ENCODE measurements at regions of chr1 and their contacts with region 1.

Region 1: DNA sequence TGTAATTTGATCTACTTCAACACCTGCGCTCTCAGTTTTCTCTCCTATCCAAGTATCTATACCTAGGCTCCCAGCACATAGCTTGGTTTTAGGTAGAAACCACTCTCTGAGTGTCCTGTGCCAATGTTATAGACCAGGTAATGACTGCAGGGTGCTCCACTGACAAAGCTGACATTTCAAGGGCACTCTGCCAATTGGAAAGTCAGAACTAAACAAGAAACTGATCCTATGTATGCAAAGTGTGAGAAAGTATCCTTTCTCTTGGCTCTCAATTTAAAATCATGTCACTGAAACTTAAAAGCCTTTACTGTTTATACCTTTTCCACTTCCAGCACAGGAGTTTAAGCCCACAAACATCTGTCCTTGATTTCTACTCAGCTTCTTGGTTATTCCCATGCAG is 45.0 kb upstream of the AIM2 start:
- DNase-seq: no peak
- ATAC-seq: no peak
- H3K4me3 ChIP-seq: no peak overlapping the region
- H3K4me3 Mint-ChIP-seq: no peak overlapping the region
- H3K27ac ChIP-seq: no peak overlapping the region
- H3K27ac Mint-ChIP-seq: no peak overlapping the region
- H3K4me1 ChIP-seq: no peaks in the 10 kb centered on the region
- H3K4me1 Mint-ChIP-seq: no peaks in the 10 kb centered on the region
- H3K27me3 ChIP-seq: no peaks in the 10 kb centered on the region
- H3K27me3 Mint-ChIP-seq: peaks cover 15% of the 10 kb centered on the region
- CTCF ChIP-seq: no peak

Region 2: GRCh38 chr1:157724537-157725220 is 1396.8 kb before region 1 on chr1:
- CTCF ChIA-PET with region 1: no interaction called
- POLR2A ChIA-PET with region 1: no interaction called
- intact Hi-C with region 1: no loop called
- DNase-seq: peak in 1 of 9 experiments; percentile 17
- ATAC-seq: peak; percentile 65
- H3K4me3 ChIP-seq: no peak overlapping the region
- H3K4me3 Mint-ChIP-seq: no peak overlapping the region
- H3K27ac ChIP-seq: peak overlapping the region in 1 of 2 experiments; percentile 61
- H3K27ac Mint-ChIP-seq: peak overlapping the region; percentile 60
- H3K4me1 ChIP-seq: peaks cover 15% of the 10 kb centered on the region
- H3K4me1 Mint-ChIP-seq: peaks cover 38% of the 10 kb centered on the region
- H3K27me3 ChIP-seq: no peaks in the 10 kb centered on the region
- H3K27me3 Mint-ChIP-seq: no peaks in the 10 kb centered on the region
- CTCF ChIP-seq: no peak

Region 3: DNA sequence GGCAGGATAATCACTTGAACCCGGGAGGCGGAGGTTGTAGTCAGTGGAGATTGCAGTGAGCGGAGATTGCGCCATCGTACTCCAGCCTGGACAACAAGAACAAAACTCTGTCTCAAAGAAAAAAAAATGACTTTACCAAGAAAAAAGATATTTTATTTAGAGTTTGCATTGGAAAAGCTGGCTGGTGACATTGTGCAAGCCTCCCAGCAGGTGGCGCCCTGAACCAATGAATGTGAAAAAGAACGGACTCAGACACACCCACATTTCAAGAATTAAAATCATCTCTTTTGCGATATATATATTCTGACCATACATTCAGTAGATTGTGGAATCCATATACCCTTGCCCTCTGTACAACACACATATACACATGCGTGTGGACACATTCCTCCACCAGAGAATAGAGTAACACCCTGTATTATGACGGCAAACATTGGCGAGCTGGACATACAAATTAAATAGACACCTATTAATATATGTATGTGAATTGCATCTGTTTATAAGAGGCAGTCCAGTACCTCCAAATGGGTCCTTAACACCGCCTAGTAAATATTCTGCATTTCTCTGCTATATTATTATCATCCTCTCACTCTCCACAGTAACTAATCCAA is 10.8 kb after region 1 on chr1:
- CTCF ChIA-PET with region 1: interaction called, 11 read pairs
- POLR2A ChIA-PET with region 1: no interaction called
- intact Hi-C with region 1: no loop called
- DNase-seq: peak; percentile 25 to 72 (median 66)
- ATAC-seq: no peak
- H3K4me3 ChIP-seq: no peak overlapping the region
- H3K4me3 Mint-ChIP-seq: no peak overlapping the region
- H3K27ac ChIP-seq: no peak overlapping the region
- H3K27ac Mint-ChIP-seq: no peak overlapping the region
- H3K4me1 ChIP-seq: no peaks in the 10 kb centered on the region
- H3K4me1 Mint-ChIP-seq: no peaks in the 10 kb centered on the region
- H3K27me3 ChIP-seq: peaks cover 0 to 3% of the 10 kb centered on the region in 2 experiments
- H3K27me3 Mint-ChIP-seq: peaks cover 5% of the 10 kb centered on the region
- CTCF ChIP-seq: peak; percentile 89

Measured in CD8-positive, alpha-beta T cell (primary cell).